Right cardiac atrium (tissue), 5 donors: ENCODE measurements at regions of chr17 and their contacts with region 1.

Region 1: DNA sequence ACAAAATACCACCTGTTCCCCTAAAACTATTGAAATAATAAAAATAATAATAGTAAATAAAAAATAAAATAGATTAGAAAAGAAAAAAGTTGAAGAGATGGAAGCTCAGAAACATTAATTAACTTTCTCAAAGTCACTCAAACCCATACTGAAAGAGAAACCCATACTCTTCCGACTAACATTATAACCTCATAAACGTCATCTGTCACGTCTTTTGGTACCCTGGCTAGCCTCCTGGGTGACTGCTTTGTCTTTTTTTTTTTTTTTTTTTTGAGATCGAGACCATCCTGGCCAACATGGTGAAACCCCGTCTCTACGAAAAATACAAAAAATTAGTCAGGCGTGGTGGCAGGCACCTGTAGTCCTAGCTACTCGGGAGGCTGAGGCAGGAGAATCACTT is 7.6 kb downstream of the SLFN12L start:
- DNase-seq: no peak
- ATAC-seq: no peak
- H3K4me3 ChIP-seq: no peak overlapping the region
- H3K27ac ChIP-seq: no peak overlapping the region
- H3K4me1 ChIP-seq: no peaks in the 10 kb centered on the region
- H3K27me3 ChIP-seq: no peaks in the 10 kb centered on the region

Region 2: GRCh38 chr17:34892461-34893249 is 637.2 kb before region 1 on chr17:
- intact Hi-C with region 1: no loop called
- DNase-seq: no peak
- ATAC-seq: no peak
- H3K4me3 ChIP-seq: no peak overlapping the region
- H3K27ac ChIP-seq: no peak overlapping the region
- H3K4me1 ChIP-seq: no peaks in the 10 kb centered on the region
- H3K27me3 ChIP-seq: no peaks in the 10 kb centered on the region

Region 3: GRCh38 chr17:35170968-35171771 is 358.7 kb before region 1 on chr17:
- intact Hi-C with region 1: loop called in 3 of 4 experiments (anchors 5 to 10 kb)
- DNase-seq: no peak
- ATAC-seq: peak; percentile 36 to 51
- H3K4me3 ChIP-seq: no peak overlapping the region
- H3K27ac ChIP-seq: no peak overlapping the region
- H3K4me1 ChIP-seq: no peaks in the 10 kb centered on the region
- H3K27me3 ChIP-seq: no peaks in the 10 kb centered on the region